Natural killer cell (primary cell): ENCODE measurements at regions of chr11 and their contacts with region 1.

Region 1: GRCh38 chr11:128757235-128757711 is 63.4 kb downstream of the FLI1 start:
- DNase-seq: peak; percentile 64 to 89
- ATAC-seq: peak; percentile 90 to 93 (median 92)
- H3K4me3 ChIP-seq: no peak overlapping the region
- H3K4me3 Mint-ChIP-seq: peak overlapping the region; percentile 72
- H3K27ac ChIP-seq: peak overlapping the region; percentile 24
- H3K27ac Mint-ChIP-seq: peak overlapping the region; percentile 88 to 93
- H3K4me1 ChIP-seq: peaks cover 60% of the 10 kb centered on the region
- H3K4me1 Mint-ChIP-seq: peaks cover 81 to 88% of the 10 kb centered on the region in 2 donors
- H3K27me3 ChIP-seq: no peaks in the 10 kb centered on the region
- H3K27me3 Mint-ChIP-seq: no peaks in the 10 kb centered on the region
- CTCF ChIP-seq: peak; percentile 73

Region 2: GRCh38 chr11:128039140-128040021 is 717.9 kb before region 1 on chr11:
- intact Hi-C with region 1: loop called (anchors 10 kb)
- DNase-seq: peak; percentile 63 to 91
- ATAC-seq: peak; percentile 84 to 93 (median 92)
- H3K4me3 ChIP-seq: peak overlapping the region; percentile 7
- H3K4me3 Mint-ChIP-seq: peak overlapping the region; percentile 84
- H3K27ac ChIP-seq: peak overlapping the region; percentile 78
- H3K27ac Mint-ChIP-seq: peak overlapping the region; percentile 82 to 89
- H3K4me1 ChIP-seq: peaks cover 63% of the 10 kb centered on the region
- H3K4me1 Mint-ChIP-seq: peaks cover 34 to 49% of the 10 kb centered on the region in 2 donors
- H3K27me3 ChIP-seq: no peaks in the 10 kb centered on the region
- H3K27me3 Mint-ChIP-seq: no peaks in the 10 kb centered on the region
- CTCF ChIP-seq: peak; percentile 44

Region 3: GRCh38 chr11:128172046-128172878 is 585.0 kb before region 1 on chr11:
- intact Hi-C with region 1: loop called (anchors 1 kb)
- DNase-seq: peak; percentile 81 to 93
- ATAC-seq: peak; percentile 85 to 94 (median 88)
- H3K4me3 ChIP-seq: no peak overlapping the region
- H3K4me3 Mint-ChIP-seq: no peak overlapping the region
- H3K27ac ChIP-seq: no peak overlapping the region
- H3K27ac Mint-ChIP-seq: no peak overlapping the region
- H3K4me1 ChIP-seq: no peaks in the 10 kb centered on the region
- H3K4me1 Mint-ChIP-seq: peaks cover 8 to 11% of the 10 kb centered on the region in 2 donors
- H3K27me3 ChIP-seq: no peaks in the 10 kb centered on the region
- H3K27me3 Mint-ChIP-seq: peaks cover 0 to 3% of the 10 kb centered on the region in 2 donors
- CTCF ChIP-seq: peak; percentile 97

Region 4: DNA sequence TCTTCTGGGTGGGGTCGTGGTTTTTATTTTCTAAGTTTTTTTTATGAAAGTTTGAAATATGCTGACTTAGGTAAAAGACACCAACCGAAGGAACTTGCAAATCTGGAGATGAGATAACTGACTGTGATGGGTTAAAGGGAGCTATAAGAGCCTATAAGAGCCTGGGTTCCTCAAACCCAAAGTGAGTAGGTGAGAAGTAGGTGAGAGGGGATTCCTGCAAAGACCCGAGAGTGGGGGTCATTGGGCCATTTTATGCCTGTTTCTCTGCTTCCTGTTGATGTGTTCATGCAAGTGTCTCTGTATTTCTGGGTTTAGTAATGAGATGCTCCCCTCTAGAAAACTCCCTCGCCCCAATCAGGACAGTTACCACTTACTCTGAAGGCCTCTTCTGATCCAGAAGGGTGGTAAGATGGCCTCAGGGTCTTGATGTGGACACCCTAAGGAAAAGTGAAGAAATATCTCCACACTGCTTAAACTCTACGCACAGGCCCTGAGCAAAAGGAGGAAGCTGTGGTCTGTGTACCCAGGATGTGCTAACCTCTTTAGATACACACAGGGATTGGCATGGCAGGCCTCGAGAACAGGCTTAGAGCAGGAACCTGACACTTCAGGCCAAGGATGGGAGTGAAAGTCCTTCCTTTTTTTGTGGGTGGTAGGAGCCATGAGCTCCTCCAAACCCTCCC is 61.6 kb before region 1 on chr11:
- intact Hi-C with region 1: loop called (anchors 2 kb)
- DNase-seq: peak in 1 of 2 donors; percentile 73
- ATAC-seq: peak; percentile 32 to 75 (median 46)
- H3K4me3 ChIP-seq: peak overlapping the region; percentile 89
- H3K4me3 Mint-ChIP-seq: peak overlapping the region; percentile 98
- H3K27ac ChIP-seq: peak overlapping the region; percentile 86
- H3K27ac Mint-ChIP-seq: peak overlapping the region; percentile 89 to 99
- H3K4me1 ChIP-seq: peaks cover 59% of the 10 kb centered on the region
- H3K4me1 Mint-ChIP-seq: peaks cover 68 to 79% of the 10 kb centered on the region in 2 donors
- H3K27me3 ChIP-seq: no peaks in the 10 kb centered on the region
- H3K27me3 Mint-ChIP-seq: peaks cover 0 to 8% of the 10 kb centered on the region in 2 donors
- CTCF ChIP-seq: no peak

Region 5: DNA sequence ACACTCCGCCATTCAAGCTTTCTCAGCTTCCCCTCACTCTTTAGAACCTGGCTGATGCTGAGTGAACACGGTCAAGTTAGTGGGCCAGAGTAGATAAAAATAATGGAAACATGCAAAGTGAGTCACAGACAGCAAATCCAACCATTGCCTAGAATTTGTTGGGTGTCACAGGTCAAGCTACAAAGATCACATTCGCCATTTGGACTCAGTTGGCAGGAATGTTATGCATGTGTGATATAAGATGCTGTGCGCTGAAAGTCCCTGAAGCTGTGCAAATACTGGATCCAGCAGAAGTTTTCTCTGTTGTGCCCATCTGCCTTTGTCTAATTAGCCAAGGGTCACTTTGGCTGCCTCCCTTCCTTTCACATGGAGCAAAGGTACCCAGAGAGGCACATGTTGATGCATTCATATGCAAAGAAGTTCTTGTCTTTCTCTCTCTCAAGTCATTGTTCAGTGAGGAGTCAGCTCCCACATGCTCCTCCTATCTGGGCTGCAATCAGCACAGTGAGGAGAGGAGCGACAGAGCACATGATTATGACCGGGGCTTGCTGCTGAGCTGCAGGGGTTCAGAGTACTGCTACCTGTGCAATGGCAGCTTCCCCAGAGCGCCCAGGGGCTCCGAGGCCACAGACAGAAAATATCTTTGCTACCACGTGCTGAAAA is 23.7 kb before region 1 on chr11:
- intact Hi-C with region 1: loop called (anchors 2 kb)
- DNase-seq: peak in 1 of 2 donors; percentile 55
- ATAC-seq: no peak
- H3K4me3 ChIP-seq: no peak overlapping the region
- H3K4me3 Mint-ChIP-seq: peak overlapping the region; percentile 88
- H3K27ac ChIP-seq: peak overlapping the region; percentile 72
- H3K27ac Mint-ChIP-seq: peak overlapping the region; percentile 86 to 94
- H3K4me1 ChIP-seq: peaks cover 93% of the 10 kb centered on the region
- H3K4me1 Mint-ChIP-seq: peaks cover 97 to 100% of the 10 kb centered on the region in 2 donors
- H3K27me3 ChIP-seq: no peaks in the 10 kb centered on the region
- H3K27me3 Mint-ChIP-seq: no peaks in the 10 kb centered on the region
- CTCF ChIP-seq: no peak